ENCODE measurements at regions of chr19 and their contacts with region 1.

Region 1: DNA sequence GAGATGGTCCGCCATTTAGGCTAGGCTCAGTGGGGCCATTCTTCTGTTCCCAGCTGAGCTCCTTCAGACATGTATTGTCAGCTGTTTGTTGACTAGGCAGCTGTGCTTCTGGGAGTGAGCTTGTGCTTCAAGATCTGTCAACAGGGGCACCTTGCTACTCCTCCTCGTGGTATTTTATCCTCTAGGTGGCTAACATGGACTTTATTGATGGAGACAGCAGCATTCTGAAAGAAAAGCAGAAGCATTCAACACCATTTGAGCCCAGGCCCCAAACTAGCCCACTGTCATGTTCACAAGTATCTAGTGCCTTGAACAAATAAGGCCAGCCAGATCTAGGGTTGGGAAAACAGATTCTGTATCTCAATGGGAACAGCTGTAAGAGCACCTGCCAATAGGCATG is 65.9 kb downstream of the ZNF429 start:
- DNase-seq: no peak
- ATAC-seq: no peak
- H3K4me3 ChIP-seq: no peak overlapping the region
- H3K27ac ChIP-seq: no peak overlapping the region
- H3K4me1 ChIP-seq: no peaks in the 10 kb centered on the region
- H3K27me3 ChIP-seq: no peaks in the 10 kb centered on the region
- CTCF ChIP-seq: no peak
- EP300 ChIP-seq: no peak
- POLR2A ChIP-seq: no peak
- RAD21 ChIP-seq: no peak

Region 2: DNA sequence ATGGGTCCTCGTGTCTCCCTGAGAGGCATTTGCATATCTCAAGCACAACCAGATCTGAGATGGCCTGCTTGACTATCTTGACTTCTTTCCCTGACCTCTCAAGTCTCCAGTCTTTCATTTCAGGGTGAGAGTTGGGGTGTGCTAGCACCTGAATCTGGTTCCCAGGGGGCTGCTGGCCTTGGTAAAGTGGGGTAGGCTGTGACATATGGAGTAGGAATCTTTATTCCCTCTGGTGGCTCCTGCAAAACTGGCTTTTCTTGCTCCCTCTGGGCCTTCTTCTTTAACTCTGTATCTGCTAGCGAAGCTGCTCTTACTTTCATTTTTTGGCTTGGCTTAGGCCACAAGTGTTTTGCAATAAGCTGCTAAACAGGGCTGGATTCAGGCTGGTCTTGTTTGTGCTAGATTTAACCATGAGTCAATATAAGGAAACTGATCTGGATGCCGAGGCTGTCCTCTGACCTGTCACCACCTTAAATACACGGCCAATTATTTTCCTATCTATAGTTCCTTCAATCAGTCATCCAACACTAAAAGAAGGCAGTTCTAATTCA is 132.0 kb before region 1 on chr19:
- CTCF ChIA-PET with region 1: no interaction called
- POLR2A ChIA-PET with region 1: no interaction called
- RAD21 ChIA-PET with region 1: no interaction called
- SMC1A ChIA-PET with region 1: no interaction called
- in situ Hi-C with region 1: no loop called
- intact Hi-C with region 1: no loop called
- DNase-seq: no peak
- ATAC-seq: no peak
- H3K4me3 ChIP-seq: no peak overlapping the region
- H3K27ac ChIP-seq: no peak overlapping the region
- H3K4me1 ChIP-seq: no peaks in the 10 kb centered on the region
- H3K27me3 ChIP-seq: no peaks in the 10 kb centered on the region
- CTCF ChIP-seq: no peak
- EP300 ChIP-seq: no peak
- POLR2A ChIP-seq: no peak
- RAD21 ChIP-seq: no peak

Region 3: DNA sequence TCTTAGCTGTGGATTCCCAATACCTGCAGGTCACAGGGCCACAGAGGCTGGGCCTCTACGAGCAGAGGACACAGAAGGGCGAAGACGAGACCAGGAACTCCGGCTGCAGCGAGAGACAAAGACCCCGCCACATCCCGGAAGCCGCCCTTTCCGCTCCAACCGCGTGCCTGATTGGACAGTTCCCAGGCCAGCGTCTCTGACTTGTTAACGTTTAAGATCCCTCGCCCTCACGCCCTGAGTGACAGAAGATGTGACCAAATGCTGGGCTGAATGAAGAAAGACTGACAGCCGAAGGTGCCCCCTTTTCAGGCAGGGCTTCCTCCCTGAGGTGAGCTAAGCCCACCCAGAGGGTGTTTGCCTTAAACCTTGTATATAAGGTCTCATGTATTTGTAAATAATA is 850.9 kb after region 1 on chr19 and contains the start of gene ZNF98:
- CTCF ChIA-PET with region 1: no interaction called
- POLR2A ChIA-PET with region 1: no interaction called
- RAD21 ChIA-PET with region 1: no interaction called
- SMC1A ChIA-PET with region 1: no interaction called
- in situ Hi-C with region 1: loop called (anchors 10 kb)
- intact Hi-C with region 1: no loop called
- DNase-seq: no peak
- ATAC-seq: no peak
- H3K4me3 ChIP-seq: no peak within 1 kb of the TSS
- H3K27ac ChIP-seq: no peak within 1 kb of the TSS
- H3K4me1 ChIP-seq: no peaks in the 10 kb centered on the region
- H3K27me3 ChIP-seq: no peaks in the 10 kb centered on the region
- CTCF ChIP-seq: no peak
- EP300 ChIP-seq: no peak
- POLR2A ChIP-seq: no peak
- RAD21 ChIP-seq: no peak
- polyA plus RNA-seq, gene ZNF98: not detected

Measured in GM12878 (cell line).